ENCODE measurements at regions of chr6 and their contacts with region 1.

Region 1: GRCh38 chr6:80106418-80107235 is at the start of gene BCKDHB:
- DNase-seq: peak; percentile 89
- ATAC-seq: peak; percentile 98
- H3K4me3 Mint-ChIP-seq: peak within 1 kb of the TSS; percentile 91
- H3K27ac Mint-ChIP-seq: peak within 1 kb of the TSS; percentile 85
- H3K4me1 Mint-ChIP-seq: peaks cover 18% of the 10 kb centered on the region
- H3K27me3 Mint-ChIP-seq: peaks cover 7% of the 10 kb centered on the region
- CTCF ChIP-seq: no peak
- total RNA-seq, gene BCKDHB: 16.6 and 17.0 TPM in 2 replicates

Region 2: GRCh38 chr6:78867370-78868040 is 1239.1 kb before region 1 on chr6 and contains the start of gene IRAK1BP1:
- CTCF ChIA-PET with region 1: no interaction called
- POLR2A ChIA-PET with region 1: no interaction called
- intact Hi-C with region 1: loop called (anchors 2 kb)
- DNase-seq: peak; percentile 75
- ATAC-seq: peak; percentile 96
- H3K4me3 Mint-ChIP-seq: peak within 1 kb of the TSS; percentile 99
- H3K27ac Mint-ChIP-seq: peak within 1 kb of the TSS; percentile 98
- H3K4me1 Mint-ChIP-seq: peaks cover 20% of the 10 kb centered on the region
- H3K27me3 Mint-ChIP-seq: no peaks in the 10 kb centered on the region
- CTCF ChIP-seq: no peak
- total RNA-seq, gene IRAK1BP1: 2.4 and 3.0 TPM in 2 replicates

Region 3: DNA sequence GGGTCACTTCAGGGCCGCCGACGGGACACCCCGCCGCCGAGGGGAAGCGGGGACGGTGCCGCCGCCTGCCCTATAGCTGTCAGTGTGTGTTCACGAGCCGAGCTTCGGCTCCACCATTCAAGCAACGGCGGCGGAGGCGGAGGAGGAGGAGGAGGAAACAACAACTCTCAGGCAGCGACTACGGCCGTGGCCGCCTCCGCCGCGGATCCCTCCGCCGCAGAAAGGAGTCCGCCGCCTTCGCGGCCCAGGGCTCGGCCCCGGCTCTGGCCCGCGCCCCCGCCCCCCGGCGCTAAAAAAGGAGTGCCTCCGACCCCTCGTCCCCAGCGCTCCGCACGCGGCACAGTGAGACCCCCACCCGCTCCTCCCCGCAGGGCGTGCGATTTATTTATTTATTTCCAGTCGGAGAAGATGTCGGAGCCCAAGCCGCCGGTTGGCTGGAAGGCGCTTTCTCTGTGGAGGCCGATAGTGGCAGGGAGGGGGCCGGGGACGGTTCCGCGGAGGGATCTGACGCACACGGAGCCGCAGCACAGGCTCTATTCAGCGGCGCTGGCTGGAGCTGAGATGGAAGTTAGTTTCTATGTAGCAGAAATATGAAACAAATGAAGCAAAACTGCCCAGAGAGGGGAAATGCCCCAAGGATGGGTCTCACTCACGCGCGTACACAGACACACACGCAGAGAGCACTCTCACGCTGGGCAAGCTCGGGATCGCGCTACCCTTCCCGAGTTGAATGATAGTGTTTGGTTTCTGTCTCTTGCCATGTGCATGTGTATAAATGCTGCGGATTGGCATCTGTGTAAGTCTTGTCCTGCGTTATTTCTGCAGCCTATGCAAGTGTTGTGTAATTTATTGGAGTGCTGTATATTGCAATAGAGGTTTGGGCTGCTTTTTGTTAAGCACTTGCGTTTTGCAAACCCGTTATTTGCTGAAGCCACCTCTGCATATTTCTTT is 1028.3 kb before region 1 on chr6 and contains the start of gene PHIP:
- CTCF ChIA-PET with region 1: no interaction called
- POLR2A ChIA-PET with region 1: interaction called, 6 read pairs
- intact Hi-C with region 1: loop called (anchors 1 kb)
- DNase-seq: peak; percentile 93
- ATAC-seq: peak; percentile 73
- H3K4me3 Mint-ChIP-seq: peak within 1 kb of the TSS; percentile 87
- H3K27ac Mint-ChIP-seq: peak within 1 kb of the TSS; percentile 96
- H3K4me1 Mint-ChIP-seq: peaks cover 43% of the 10 kb centered on the region
- H3K27me3 Mint-ChIP-seq: peaks cover 3% of the 10 kb centered on the region
- CTCF ChIP-seq: no peak
- total RNA-seq, gene PHIP: 27.7 and 32.3 TPM in 2 replicates

Region 4: DNA sequence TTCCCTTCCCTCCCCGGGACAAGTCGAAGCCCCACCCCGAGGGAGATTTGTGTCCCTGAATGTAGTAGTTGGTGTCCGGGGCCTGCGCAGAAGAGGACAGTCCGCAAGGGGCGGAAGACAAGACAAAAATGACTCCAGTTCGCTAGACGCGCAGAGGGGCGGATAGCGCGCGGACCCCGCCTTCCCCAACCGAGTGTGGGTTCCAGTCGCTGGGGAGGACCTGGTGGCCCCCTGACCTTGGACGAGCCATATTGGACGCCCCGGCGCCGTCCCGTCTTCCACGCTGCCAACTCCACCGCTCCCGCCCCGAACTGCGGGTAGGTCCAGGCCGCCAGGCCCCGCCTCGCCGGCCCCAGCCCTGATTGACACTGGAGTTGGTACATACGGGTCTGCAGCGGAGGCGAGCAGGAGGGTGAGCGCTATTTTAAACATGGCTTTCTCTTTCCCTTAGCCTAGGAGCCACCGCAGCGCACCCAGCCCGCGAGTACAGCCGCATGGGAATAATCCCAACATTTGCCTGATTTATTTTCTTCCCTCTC is 872.9 kb before region 1 on chr6:
- CTCF ChIA-PET with region 1: no interaction called
- POLR2A ChIA-PET with region 1: no interaction called
- intact Hi-C with region 1: loop called (anchors 1 kb)
- DNase-seq: peak; percentile 63
- ATAC-seq: peak; percentile 57
- H3K4me3 Mint-ChIP-seq: peak overlapping the region; percentile 96
- H3K27ac Mint-ChIP-seq: peak overlapping the region; percentile 89
- H3K4me1 Mint-ChIP-seq: peaks cover 14% of the 10 kb centered on the region
- H3K27me3 Mint-ChIP-seq: no peaks in the 10 kb centered on the region
- CTCF ChIP-seq: no peak

Region 5: GRCh38 chr6:79536954-79537747 is 569.5 kb before region 1 on chr6 and contains the start of gene LCA5:
- CTCF ChIA-PET with region 1: no interaction called
- POLR2A ChIA-PET with region 1: no interaction called
- intact Hi-C with region 1: loop called (anchors 1 kb)
- DNase-seq: peak; percentile 73
- ATAC-seq: peak; percentile 98
- H3K4me3 Mint-ChIP-seq: no peak within 1 kb of the TSS
- H3K27ac Mint-ChIP-seq: no peak within 1 kb of the TSS
- H3K4me1 Mint-ChIP-seq: no peaks in the 10 kb centered on the region
- H3K27me3 Mint-ChIP-seq: no peaks in the 10 kb centered on the region
- CTCF ChIP-seq: no peak
- total RNA-seq, gene LCA5: 0.17 and 0.18 TPM in 2 replicates

Region 6: GRCh38 chr6:79813854-79814709 is 292.5 kb before region 1 on chr6:
- CTCF ChIA-PET with region 1: no interaction called
- POLR2A ChIA-PET with region 1: no interaction called
- intact Hi-C with region 1: no loop called
- DNase-seq: peak; percentile 22
- ATAC-seq: peak; percentile 60
- H3K4me3 Mint-ChIP-seq: no peak overlapping the region
- H3K27ac Mint-ChIP-seq: no peak overlapping the region
- H3K4me1 Mint-ChIP-seq: no peaks in the 10 kb centered on the region
- H3K27me3 Mint-ChIP-seq: no peaks in the 10 kb centered on the region
- CTCF ChIP-seq: no peak

Region 7: GRCh38 chr6:79864001-79864400 is 242.6 kb before region 1 on chr6:
- CTCF ChIA-PET with region 1: no interaction called
- POLR2A ChIA-PET with region 1: no interaction called
- intact Hi-C with region 1: no loop called
- DNase-seq: no peak
- ATAC-seq: no peak
- H3K4me3 Mint-ChIP-seq: no peak overlapping the region
- H3K27ac Mint-ChIP-seq: no peak overlapping the region
- H3K4me1 Mint-ChIP-seq: peaks cover 2% of the 10 kb centered on the region
- H3K27me3 Mint-ChIP-seq: no peaks in the 10 kb centered on the region
- CTCF ChIP-seq: no peak

Region 8: DNA sequence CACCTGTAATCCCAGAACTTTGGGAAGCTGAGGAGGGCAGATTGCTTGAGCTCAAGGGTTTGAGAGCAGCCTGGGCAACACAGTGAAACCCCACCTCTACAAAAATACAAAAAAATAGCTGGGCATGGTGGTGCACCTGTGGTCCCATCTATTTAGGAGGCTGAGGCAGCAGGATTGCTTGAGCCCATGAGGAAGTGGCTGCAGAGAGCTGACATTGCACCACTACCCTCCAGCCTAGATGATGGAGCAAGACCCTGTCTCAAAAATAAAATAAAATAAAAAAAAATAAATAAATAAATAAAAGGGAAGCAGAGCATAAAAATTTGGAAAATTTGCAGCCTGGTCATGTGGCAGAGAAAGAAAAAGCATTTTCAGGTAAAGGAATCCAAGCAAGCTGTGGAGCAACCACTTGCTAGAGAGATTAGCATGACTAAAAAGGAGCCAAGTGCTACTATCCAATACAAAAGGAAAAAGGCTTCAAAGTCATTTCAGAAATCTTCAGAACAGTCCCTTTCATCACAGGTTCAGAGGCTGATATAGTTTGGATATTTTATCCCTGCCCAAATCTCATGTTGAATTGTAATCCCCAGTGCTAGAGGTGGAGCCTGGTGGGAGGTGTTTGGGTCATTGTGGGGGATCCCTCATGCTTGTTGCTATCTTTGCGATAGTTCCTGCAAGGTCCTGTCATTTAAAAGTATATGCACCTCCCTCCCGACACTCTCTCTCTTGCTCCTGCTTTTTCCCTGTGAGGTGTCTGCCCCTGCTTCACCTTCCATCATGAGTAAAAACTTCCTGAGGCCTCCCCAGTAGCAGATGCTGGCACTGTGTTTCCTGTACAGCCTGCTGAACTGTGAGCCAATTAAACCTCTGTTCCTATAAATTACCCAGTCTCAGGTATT is 113.4 kb before region 1 on chr6:
- CTCF ChIA-PET with region 1: no interaction called
- POLR2A ChIA-PET with region 1: no interaction called
- intact Hi-C with region 1: no loop called
- DNase-seq: no peak
- ATAC-seq: no peak
- H3K4me3 Mint-ChIP-seq: no peak overlapping the region
- H3K27ac Mint-ChIP-seq: no peak overlapping the region
- H3K4me1 Mint-ChIP-seq: no peaks in the 10 kb centered on the region
- H3K27me3 Mint-ChIP-seq: peaks cover 4% of the 10 kb centered on the region
- CTCF ChIP-seq: no peak

Region 9: DNA sequence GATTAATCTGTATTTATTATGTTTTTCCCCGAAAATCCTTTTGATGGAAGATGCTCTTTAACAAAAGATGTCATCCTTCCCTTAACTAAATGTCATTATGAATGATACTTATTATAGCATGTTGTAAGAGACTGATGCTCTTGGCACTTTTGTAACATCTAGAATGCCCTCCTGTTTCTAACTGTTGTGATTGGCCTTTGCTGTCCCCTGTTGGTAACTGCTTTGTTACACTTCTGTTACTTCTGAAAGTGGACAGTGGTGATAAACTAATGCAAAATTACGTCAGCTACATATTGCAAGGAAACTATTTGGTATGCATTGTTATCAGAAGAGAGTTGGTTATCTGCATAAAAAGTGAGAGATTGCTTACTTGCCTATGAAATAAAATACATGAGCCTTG is 96.3 kb before region 1 on chr6:
- CTCF ChIA-PET with region 1: no interaction called
- POLR2A ChIA-PET with region 1: no interaction called
- intact Hi-C with region 1: no loop called
- DNase-seq: no peak
- ATAC-seq: no peak
- H3K4me3 Mint-ChIP-seq: no peak overlapping the region
- H3K27ac Mint-ChIP-seq: no peak overlapping the region
- H3K4me1 Mint-ChIP-seq: peaks cover 2% of the 10 kb centered on the region
- H3K27me3 Mint-ChIP-seq: no peaks in the 10 kb centered on the region
- CTCF ChIP-seq: no peak

Region 10: GRCh38 chr6:80163658-80164187 is 57.1 kb after region 1 on chr6:
- CTCF ChIA-PET with region 1: no interaction called
- POLR2A ChIA-PET with region 1: no interaction called
- intact Hi-C with region 1: loop called (anchors 2 kb)
- DNase-seq: no peak
- ATAC-seq: peak; percentile 77
- H3K4me3 Mint-ChIP-seq: no peak overlapping the region
- H3K27ac Mint-ChIP-seq: no peak overlapping the region
- H3K4me1 Mint-ChIP-seq: peaks cover 12% of the 10 kb centered on the region
- H3K27me3 Mint-ChIP-seq: no peaks in the 10 kb centered on the region
- CTCF ChIP-seq: no peak

Measured in activated B cell treated with CpG ODN at 0.5 μM for 24 hours (primary cell).